ENCODE measurements at regions of chr1 and their contacts with region 1.

Region 1: DNA sequence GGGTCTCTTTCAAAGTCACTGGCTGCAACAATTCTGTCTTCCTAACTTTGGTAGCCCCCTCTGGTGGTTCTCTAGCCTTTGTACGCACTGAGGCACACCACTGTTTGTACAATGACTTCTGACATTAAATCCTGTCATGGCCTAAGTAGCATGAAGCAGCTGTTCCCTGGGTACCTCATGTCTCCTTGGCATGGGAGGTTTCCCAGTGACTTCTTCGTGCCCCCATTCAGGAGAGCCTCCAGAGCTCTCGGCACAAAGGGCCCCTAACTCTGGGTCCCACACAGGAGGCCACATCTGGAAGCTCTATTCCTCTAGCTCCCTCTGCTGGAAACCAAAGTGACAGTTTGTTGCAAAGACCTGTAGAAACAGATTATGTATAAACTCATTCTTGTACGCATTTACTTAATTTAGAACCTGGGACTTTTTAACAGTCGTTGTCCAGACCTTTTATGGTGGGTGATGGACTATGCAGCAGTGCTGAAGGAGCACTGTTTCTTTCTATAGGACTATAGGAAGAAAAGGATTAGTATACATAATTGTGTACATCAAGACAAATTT is 13.4 kb downstream of the SWT1 start:
- DNase-seq: peak; percentile 32
- ATAC-seq: peak; percentile 97
- H3K4me3 ChIP-seq: no peak overlapping the region
- H3K27ac ChIP-seq: no peak overlapping the region
- H3K4me1 ChIP-seq: no peaks in the 10 kb centered on the region; the same call in 1 of the 2 replicates
- H3K27me3 ChIP-seq: no peaks in the 10 kb centered on the region
- CTCF ChIP-seq: peak; percentile 64 to 70 (median 67)
- EP300 ChIP-seq: no peak
- POLR2A ChIP-seq: no peak
- RAD21 ChIP-seq: peak; percentile 85

Region 2: GRCh38 chr1:184892116-184892515 is 278.3 kb before region 1 on chr1:
- CTCF ChIA-PET with region 1: interaction called, 10 read pairs
- POLR2A ChIA-PET with region 1: no interaction called
- RAD21 ChIA-PET with region 1: no interaction called
- SMC1A ChIA-PET with region 1: no interaction called
- in situ Hi-C with region 1: no loop called
- intact Hi-C with region 1: no loop called
- DNase-seq: no peak
- ATAC-seq: peak; percentile 94
- H3K4me3 ChIP-seq: no peak overlapping the region
- H3K27ac ChIP-seq: no peak overlapping the region
- H3K4me1 ChIP-seq: peaks cover 12% of the 10 kb centered on the region
- H3K27me3 ChIP-seq: no peaks in the 10 kb centered on the region
- CTCF ChIP-seq: no peak
- EP300 ChIP-seq: no peak
- POLR2A ChIP-seq: no peak
- RAD21 ChIP-seq: no peak

Region 3: DNA sequence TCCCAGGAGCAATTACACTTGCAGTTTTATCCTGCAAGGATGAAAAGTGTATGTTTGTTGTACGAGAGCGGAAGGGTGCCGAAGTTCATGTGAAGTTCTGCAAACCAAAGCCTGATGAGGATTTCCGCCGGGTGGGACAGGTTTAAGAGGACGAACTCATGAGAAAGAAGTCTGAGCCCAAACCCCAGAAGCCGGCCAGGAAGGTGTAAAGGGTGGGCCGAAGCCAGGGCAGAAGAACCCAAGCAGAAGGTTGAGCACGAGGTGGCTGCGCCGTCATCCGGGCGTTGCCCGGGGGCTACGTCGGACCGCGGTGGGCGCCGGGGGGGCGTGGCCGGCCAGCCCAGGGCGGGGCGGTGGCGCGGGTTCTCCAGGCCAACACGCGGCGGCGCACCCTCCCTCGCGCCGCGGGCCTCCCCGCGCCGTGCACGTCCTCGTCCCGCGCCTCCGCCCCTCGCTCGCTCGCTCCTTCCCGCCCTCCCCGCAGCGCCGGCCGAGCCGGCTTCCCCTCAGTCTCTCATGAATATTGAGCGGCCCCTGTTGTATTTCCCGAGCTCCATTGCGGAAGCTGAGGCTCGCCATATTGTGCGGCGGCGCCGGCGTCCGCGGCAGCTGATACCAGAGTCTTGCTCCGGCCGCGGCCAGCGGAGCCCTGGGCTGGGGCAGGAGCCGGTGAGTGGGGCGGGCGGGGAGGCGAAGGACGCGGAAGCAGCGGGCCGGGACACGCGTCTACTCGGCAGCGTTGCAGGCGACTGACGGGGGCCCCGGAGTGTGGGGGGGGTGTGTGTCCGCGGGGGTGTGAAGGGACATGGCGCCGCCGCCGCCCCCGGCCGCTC is 125.2 kb before region 1 on chr1 and contains the start of gene RNF2:
- CTCF ChIA-PET with region 1: interaction called, 38 read pairs
- POLR2A ChIA-PET with region 1: no interaction called
- RAD21 ChIA-PET with region 1: interaction called, 35 read pairs
- SMC1A ChIA-PET with region 1: interaction called, 14 read pairs
- in situ Hi-C with region 1: no loop called
- intact Hi-C with region 1: no loop called
- DNase-seq: peak; percentile 13
- ATAC-seq: peak; percentile 92
- H3K4me3 ChIP-seq: peak within 1 kb of the TSS; percentile 73
- H3K27ac ChIP-seq: no peak within 1 kb of the TSS
- H3K4me1 ChIP-seq: no peaks in the 10 kb centered on the region
- H3K27me3 ChIP-seq: no peaks in the 10 kb centered on the region
- CTCF ChIP-seq: no peak; a peak in 1 of 6 replicates
- EP300 ChIP-seq: no peak
- POLR2A ChIP-seq: peak; percentile 69
- RAD21 ChIP-seq: 0 out of 2 replicates have a peak, but pooled peaks have one; percentile 13
- polyA plus RNA-seq, gene RNF2: 4.8 to 5.2 TPM

Region 4: GRCh38 chr1:185087101-185087500 is 83.3 kb before region 1 on chr1:
- CTCF ChIA-PET with region 1: interaction called, 10 read pairs
- POLR2A ChIA-PET with region 1: no interaction called
- RAD21 ChIA-PET with region 1: interaction called, 5 read pairs
- SMC1A ChIA-PET with region 1: interaction called, 4 read pairs
- in situ Hi-C with region 1: no loop called
- intact Hi-C with region 1: no loop called
- DNase-seq: no peak
- ATAC-seq: no peak
- H3K4me3 ChIP-seq: no peak overlapping the region
- H3K27ac ChIP-seq: no peak overlapping the region
- H3K4me1 ChIP-seq: no peaks in the 10 kb centered on the region
- H3K27me3 ChIP-seq: no peaks in the 10 kb centered on the region
- CTCF ChIP-seq: no peak
- EP300 ChIP-seq: no peak
- POLR2A ChIP-seq: no peak
- RAD21 ChIP-seq: no peak

Region 5: GRCh38 chr1:185156854-185157598 is 13.3 kb before region 1 on chr1 and contains the starts of genes SWT1 and TRMT1L:
- CTCF ChIA-PET with region 1: interaction called, 121 read pairs
- POLR2A ChIA-PET with region 1: interaction called, 5 read pairs
- RAD21 ChIA-PET with region 1: interaction called, 65 read pairs
- SMC1A ChIA-PET with region 1: interaction called, 39 read pairs
- in situ Hi-C with region 1: no loop called
- intact Hi-C with region 1: no loop called
- DNase-seq: peak; percentile 93
- ATAC-seq: peak; percentile 92
- H3K4me3 ChIP-seq: peak within 1 kb of the TSS; percentile 94
- H3K27ac ChIP-seq: peak within 1 kb of the TSS; percentile 94
- H3K4me1 ChIP-seq: peaks cover 18% of the 10 kb centered on the region; the same call in 1 of the 2 replicates
- H3K27me3 ChIP-seq: no peaks in the 10 kb centered on the region
- CTCF ChIP-seq: no peak
- EP300 ChIP-seq: no peak
- POLR2A ChIP-seq: peak; percentile 89
- RAD21 ChIP-seq: no peak
- polyA plus RNA-seq, gene SWT1: 1.0 to 1.4 TPM
- polyA plus RNA-seq, gene TRMT1L: 3.5 to 4.1 TPM

Region 6: GRCh38 chr1:185232874-185233273 is 62.5 kb after region 1 on chr1:
- CTCF ChIA-PET with region 1: no interaction called
- POLR2A ChIA-PET with region 1: no interaction called
- RAD21 ChIA-PET with region 1: no interaction called
- SMC1A ChIA-PET with region 1: no interaction called
- in situ Hi-C with region 1: no loop called
- intact Hi-C with region 1: no loop called
- DNase-seq: no peak
- ATAC-seq: no peak
- H3K4me3 ChIP-seq: no peak overlapping the region
- H3K27ac ChIP-seq: no peak overlapping the region
- H3K4me1 ChIP-seq: no peaks in the 10 kb centered on the region
- H3K27me3 ChIP-seq: no peaks in the 10 kb centered on the region
- CTCF ChIP-seq: no peak
- EP300 ChIP-seq: no peak
- POLR2A ChIP-seq: no peak
- RAD21 ChIP-seq: no peak

Region 7: DNA sequence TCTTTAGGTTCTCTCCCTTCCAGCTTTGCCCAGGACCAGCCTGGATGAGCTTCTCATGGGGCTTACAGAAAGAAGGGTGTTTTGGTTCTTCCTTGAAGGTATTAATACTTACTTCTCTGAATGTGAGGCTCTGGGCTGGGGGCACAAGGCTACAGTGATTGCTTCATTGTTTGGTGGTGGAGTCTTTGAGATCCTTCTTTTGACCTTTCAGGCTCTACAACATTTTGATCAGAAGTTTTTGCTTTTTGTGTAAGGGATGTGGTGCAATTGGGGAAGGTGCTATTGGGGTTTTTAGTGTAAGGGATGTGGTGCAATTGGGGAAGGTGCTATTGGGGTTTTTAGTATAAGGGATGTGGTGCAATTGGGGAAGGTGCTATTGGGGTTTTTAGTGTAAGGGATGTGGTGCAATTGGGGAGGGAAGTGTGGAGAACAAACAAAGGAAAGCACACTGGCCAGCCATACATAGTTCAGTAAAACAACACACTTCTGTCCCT is 250.3 kb after region 1 on chr1:
- CTCF ChIA-PET with region 1: no interaction called
- POLR2A ChIA-PET with region 1: no interaction called
- RAD21 ChIA-PET with region 1: no interaction called
- SMC1A ChIA-PET with region 1: no interaction called
- in situ Hi-C with region 1: no loop called
- intact Hi-C with region 1: no loop called
- DNase-seq: no peak
- ATAC-seq: no peak
- H3K4me3 ChIP-seq: no peak overlapping the region
- H3K27ac ChIP-seq: no peak overlapping the region
- H3K4me1 ChIP-seq: no peaks in the 10 kb centered on the region
- H3K27me3 ChIP-seq: peaks cover 0 to 2% of the 10 kb centered on the region in 2 experiments; a peak in 1 of 4 replicates
- CTCF ChIP-seq: no peak
- EP300 ChIP-seq: no peak
- POLR2A ChIP-seq: no peak
- RAD21 ChIP-seq: no peak

Region 8: GRCh38 chr1:185681034-185681633 is 510.8 kb after region 1 on chr1:
- CTCF ChIA-PET with region 1: interaction called, 20 read pairs
- POLR2A ChIA-PET with region 1: no interaction called
- RAD21 ChIA-PET with region 1: interaction called, 12 read pairs
- SMC1A ChIA-PET with region 1: interaction called, 9 read pairs
- in situ Hi-C with region 1: no loop called
- intact Hi-C with region 1: no loop called
- DNase-seq: peak; percentile 21
- ATAC-seq: peak; percentile 89
- H3K4me3 ChIP-seq: no peak overlapping the region
- H3K27ac ChIP-seq: no peak overlapping the region
- H3K4me1 ChIP-seq: no peaks in the 10 kb centered on the region
- H3K27me3 ChIP-seq: no peaks in the 10 kb centered on the region
- CTCF ChIP-seq: peak; percentile 43 to 65 (median 49); a peak in 4 of 6 replicates
- EP300 ChIP-seq: no peak
- POLR2A ChIP-seq: no peak
- RAD21 ChIP-seq: peak; percentile 74

Measured in GM12878 (cell line).